Sigmoid colon (tissue), 7 donors: ENCODE measurements at regions of chr4 and their contacts with region 1.

Region 1: GRCh38 chr4:165464813-165465381 is 86.1 kb downstream of the CPE start:
- DNase-seq: no peak
- H3K4me3 ChIP-seq: no peak overlapping the region
- H3K27ac ChIP-seq: no peak overlapping the region
- H3K4me1 ChIP-seq: peaks cover 0 to 19% (median 9%) of the 10 kb centered on the region in 4 donors
- H3K27me3 ChIP-seq: no peaks in the 10 kb centered on the region
- CTCF ChIP-seq: peak; percentile 53 to 72 (median 62)
- EP300 ChIP-seq: no peak
- POLR2A ChIP-seq: no peak

Region 2: DNA sequence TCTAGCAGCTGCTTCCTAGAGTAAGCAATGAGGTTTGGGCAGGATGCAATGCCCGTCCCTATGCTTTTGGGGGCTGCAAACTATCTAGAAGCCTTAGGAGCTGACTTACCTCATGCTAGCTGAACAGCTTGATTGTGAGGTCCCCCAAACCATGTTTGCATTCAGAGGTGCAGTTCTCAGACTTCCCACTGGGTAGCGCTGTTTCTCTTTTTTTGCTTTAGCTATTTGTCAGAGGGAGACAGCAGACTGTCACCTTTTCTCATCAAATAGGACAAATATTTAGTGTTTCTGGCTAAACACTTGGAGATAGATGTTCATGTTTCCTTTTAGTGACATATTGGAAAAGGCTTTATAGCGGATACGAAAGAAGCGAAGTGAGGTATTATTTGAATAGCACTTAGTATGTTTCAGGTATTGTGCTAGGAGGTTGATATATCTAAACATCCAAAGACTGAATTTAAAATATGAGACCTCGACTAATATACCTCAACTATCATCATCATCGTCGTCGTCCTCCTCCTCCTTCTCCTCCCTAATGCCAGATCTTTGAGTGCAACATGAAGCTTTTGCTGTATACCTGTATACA is 333.6 kb before region 1 on chr4:
- intact Hi-C with region 1: loop called (anchors 1 kb)
- DNase-seq: peak; percentile 70
- H3K4me3 ChIP-seq: no peak overlapping the region
- H3K27ac ChIP-seq: no peak overlapping the region
- H3K4me1 ChIP-seq: no peaks in the 10 kb centered on the region
- H3K27me3 ChIP-seq: no peaks in the 10 kb centered on the region
- CTCF ChIP-seq: peak; percentile 49 to 84 (median 82)
- EP300 ChIP-seq: no peak
- POLR2A ChIP-seq: no peak

Region 3: GRCh38 chr4:165378745-165379677 is 85.9 kb before region 1 on chr4 and contains the start of gene CPE:
- intact Hi-C with region 1: loop called (anchors 10 kb)
- DNase-seq: peak; percentile 82
- H3K4me3 ChIP-seq: peak within 1 kb of the TSS; percentile 33 to 67 (median 64)
- H3K27ac ChIP-seq: peak within 1 kb of the TSS; percentile 70 to 82 (median 78)
- H3K4me1 ChIP-seq: peaks cover 0 to 8% (median 5%) of the 10 kb centered on the region in 4 donors
- H3K27me3 ChIP-seq: no peaks in the 10 kb centered on the region
- CTCF ChIP-seq: peak; percentile 24 to 80 (median 42)
- EP300 ChIP-seq: no peak
- POLR2A ChIP-seq: peak; percentile 27 to 63
- total RNA-seq, gene CPE: 31.8 to 64.5 (median 48.2) TPM